Breast epithelium (tissue), 4 donors: ENCODE measurements at regions of chr20 and their contacts with region 1.

Region 1: DNA sequence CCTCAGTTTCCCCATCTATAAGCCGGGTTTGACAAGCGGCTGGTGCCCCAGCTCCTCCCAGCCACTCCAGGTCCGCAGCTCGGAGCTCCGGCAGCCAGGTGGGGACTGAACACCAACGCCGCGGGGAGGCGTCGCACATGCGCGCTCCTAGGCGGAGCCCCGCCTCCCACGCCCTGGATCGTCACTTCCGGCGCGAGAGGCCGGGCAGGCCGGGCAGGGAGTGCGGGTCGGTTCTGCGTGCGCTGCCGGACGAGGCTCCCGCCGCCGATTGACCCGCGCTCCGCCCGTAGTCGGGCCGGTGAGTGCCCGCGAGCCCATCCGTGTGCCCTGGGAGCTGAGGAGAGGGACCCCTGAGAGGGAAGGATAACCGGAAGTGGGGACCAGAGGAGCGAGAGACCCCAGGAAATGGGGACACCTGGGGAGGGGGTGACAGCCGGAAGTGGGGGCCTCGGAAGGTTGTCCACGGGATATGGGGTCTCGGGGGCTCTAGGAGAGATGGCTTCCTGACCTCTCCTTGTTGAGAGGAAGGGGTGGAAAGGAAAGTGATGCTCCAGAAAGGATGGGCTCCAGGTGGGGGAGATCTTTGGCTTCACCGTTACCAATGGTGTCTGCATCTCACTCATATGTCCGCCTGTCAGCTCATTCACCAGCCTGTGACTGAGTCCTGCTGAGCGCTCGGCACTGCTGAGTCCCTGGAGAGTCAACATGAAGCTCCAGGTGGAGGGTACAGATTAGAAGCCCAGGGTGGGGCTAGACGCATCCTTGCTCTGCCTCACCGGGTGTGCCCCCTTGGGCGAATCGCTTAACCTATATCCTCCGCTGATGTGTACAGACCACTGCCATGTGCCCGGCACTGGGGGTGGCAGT is at the start of gene TTPAL:
- DNase-seq: peak; percentile 86 to 89
- H3K4me3 ChIP-seq: peak within 1 kb of the TSS; percentile 66 to 83 (median 83)
- H3K27ac ChIP-seq: peak within 1 kb of the TSS; percentile 92 to 93
- H3K4me1 ChIP-seq: peaks cover 0 to 4% of the 10 kb centered on the region in 2 donors
- H3K27me3 ChIP-seq: no peaks in the 10 kb centered on the region
- CTCF ChIP-seq: peak in 1 of 3 donors; percentile 16
- POLR2A ChIP-seq: peak; percentile 97
- total RNA-seq, gene TTPAL: 13.5 to 40.8 (median 14.7) TPM

Region 2: GRCh38 chr20:44407402-44408184 is 68.3 kb before region 1 on chr20:
- intact Hi-C with region 1: no loop called
- DNase-seq: no peak
- H3K4me3 ChIP-seq: no peak overlapping the region
- H3K27ac ChIP-seq: no peak overlapping the region
- H3K4me1 ChIP-seq: no peaks in the 10 kb centered on the region
- H3K27me3 ChIP-seq: peaks cover 0 to 4% of the 10 kb centered on the region in 2 donors
- CTCF ChIP-seq: no peak
- POLR2A ChIP-seq: no peak

Region 3: DNA sequence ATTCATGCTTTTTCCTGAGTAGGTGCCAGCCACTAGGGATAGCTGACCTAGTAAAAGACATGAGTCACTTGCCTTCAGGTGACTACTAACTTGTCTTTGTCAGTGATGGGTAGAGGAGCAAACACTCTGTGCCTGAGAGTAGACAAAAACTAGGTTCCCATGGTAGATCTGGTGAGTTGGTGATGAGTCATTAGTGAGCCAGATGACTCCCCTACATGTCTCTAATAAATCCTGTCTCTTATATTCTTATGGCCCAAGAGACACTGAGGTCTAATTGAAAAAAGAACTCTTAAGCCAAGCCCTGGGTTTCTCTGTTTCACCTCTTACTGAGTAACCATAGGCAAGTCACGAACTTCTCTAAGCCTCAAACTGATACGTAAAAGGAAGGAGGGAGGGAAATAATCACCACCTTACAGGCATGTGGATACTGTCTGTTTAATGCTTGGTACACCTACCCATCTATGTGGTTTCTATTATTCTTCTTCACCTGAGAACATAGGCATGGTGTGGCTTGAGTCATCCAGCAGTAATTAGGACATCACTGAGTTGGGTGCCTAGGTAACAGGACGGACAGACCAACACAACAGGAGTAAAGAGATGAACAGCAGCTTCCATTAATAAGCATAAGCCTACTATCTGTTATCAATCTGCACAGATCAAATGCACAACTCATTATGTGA is 20.0 kb after region 1 on chr20:
- intact Hi-C with region 1: loop called (anchors 2 kb)
- DNase-seq: no peak
- H3K4me3 ChIP-seq: no peak overlapping the region
- H3K27ac ChIP-seq: peak overlapping the region; percentile 5 to 84
- H3K4me1 ChIP-seq: no peaks in the 10 kb centered on the region
- H3K27me3 ChIP-seq: no peaks in the 10 kb centered on the region
- CTCF ChIP-seq: no peak
- POLR2A ChIP-seq: no peak

Region 4: DNA sequence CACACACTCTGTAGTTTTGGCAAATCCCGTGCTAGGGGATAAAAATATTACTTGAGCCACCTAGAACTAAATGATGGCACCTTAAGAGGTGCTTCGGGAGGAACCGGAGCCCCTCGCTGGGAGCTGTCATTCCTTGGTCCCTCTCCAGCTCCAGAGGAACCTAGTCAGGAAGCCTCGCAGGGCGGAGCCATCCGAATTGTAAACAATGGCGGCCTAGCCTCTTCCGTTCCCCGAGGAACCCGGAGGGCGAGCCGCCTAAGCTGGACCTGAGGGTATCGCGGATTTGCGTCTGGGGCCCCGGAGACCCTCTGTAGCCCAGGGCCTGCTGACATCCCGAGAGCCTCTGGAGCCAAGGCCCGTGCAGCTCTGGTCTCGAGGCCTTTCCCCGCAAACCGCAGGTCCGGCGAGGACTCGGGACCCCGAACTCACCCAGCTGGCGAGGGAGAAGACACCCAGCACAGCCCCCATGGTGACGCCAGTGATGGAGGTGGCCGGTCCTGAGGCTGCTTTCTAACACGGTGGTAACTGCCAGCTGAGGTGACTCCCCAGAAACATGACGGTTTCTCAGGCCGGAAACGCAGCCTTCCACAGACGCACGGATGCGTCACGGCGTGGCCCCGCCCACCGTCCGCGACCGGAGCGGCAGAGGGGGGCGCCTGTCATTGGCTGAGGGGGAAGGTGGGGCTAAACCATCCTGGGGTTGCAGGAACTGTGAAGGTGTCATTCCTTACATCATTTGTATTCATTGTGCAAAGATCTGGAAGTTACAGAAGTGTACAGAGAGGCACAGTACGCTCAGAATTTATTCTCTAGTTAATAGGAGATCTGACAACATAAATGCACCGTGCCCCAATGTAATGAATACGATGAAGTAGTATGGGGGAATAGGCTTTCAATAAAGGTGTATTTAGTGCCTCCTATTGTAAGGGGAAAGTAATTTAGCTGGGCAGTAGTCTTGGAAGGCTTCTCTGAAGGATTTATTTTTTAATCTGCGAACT is 45.9 kb after region 1 on chr20 and contains the start of gene SERINC3:
- intact Hi-C with region 1: no loop called
- DNase-seq: peak; percentile 96 to 97
- H3K4me3 ChIP-seq: peak within 1 kb of the TSS; percentile 95 to 98 (median 95)
- H3K27ac ChIP-seq: peak within 1 kb of the TSS; percentile 99 to 100
- H3K4me1 ChIP-seq: peaks cover 0 to 3% of the 10 kb centered on the region in 2 donors
- H3K27me3 ChIP-seq: no peaks in the 10 kb centered on the region
- CTCF ChIP-seq: no peak
- POLR2A ChIP-seq: peak; percentile 70
- total RNA-seq, gene SERINC3: 91.1 to 254 (median 100) TPM

Region 5: GRCh38 chr20:46363800-46364634 is 1888.1 kb after region 1 on chr20:
- intact Hi-C with region 1: loop called (anchors 10 kb)
- DNase-seq: peak; percentile 83 to 84
- H3K4me3 ChIP-seq: peak overlapping the region; percentile 85 to 98 (median 88)
- H3K27ac ChIP-seq: peak overlapping the region; percentile 98 to 100
- H3K4me1 ChIP-seq: peaks cover 3 to 18% of the 10 kb centered on the region in 2 donors
- H3K27me3 ChIP-seq: no peaks in the 10 kb centered on the region
- CTCF ChIP-seq: no peak
- POLR2A ChIP-seq: peak; percentile 71